HEK293 (cell line): ENCODE measurements at regions of chr14 and their contacts with region 1.

Region 1: DNA sequence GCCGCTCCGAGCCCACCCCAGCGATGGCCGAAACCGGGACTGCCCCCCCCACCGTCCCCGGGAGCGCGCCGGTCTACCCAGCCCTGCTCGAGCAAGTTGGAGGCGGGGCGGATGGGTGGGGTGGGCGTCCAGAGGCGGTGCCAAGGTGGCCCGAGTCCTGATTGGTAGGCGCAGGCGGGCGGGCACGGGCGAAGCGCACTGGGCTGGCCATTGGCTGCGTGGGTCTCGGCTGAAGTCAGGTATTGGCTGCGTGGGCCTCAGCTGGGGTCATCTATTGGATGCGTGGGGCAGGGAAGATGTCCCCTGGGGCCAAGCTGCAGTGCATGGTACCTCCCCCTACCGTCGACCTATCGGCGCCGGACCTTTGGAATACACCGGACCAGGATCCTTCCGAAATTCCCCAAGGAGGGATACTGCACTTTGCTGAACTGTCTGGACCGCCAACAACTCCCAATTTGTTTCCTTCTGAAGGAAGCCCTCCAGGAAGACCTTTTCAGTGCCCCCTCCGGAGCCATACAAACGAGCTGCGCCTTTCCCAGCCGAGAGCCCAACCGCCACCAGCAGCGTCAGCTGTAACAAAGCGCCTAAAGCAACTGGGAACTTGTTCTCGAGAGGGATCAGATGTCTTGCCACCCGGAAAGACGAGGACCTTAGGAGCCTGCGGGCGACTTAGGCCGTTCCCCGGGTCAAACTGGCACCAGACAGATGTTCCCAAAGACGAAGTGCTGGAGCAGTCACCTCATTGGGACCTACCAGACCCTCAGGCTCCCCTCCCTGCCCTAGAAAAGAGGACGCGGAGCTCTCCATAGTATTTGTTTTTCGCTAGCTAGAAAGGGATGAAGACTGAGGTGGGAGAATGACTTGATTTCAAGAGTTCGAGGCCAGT is at the start of gene HOMEZ:
- H3K4me3 ChIP-seq: peak within 1 kb of the TSS; percentile 90
- H3K27ac ChIP-seq: peak within 1 kb of the TSS; percentile 96
- H3K4me1 ChIP-seq: peaks cover 12% of the 10 kb centered on the region
- CTCF ChIP-seq: 0 out of 2 replicates have a peak, but pooled peaks have one; percentile 31

Region 2: DNA sequence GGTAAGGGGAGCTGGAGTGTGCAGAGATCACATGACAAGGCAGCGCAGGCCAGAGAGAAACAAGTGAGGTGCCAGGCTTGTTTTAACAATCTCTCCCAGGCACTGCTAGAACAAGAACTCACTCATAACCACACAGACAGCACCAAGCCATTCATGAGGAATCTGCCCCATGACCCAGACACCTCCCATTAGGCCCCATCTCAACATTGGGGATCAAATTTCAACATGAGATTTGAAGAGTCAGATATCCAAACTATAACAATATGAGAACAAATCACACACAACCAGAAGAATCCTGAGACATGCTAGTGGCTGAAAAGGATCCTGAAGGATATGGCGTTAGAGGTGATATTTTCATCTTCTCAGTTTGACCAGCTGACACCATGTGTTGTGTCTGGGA is 664.0 kb before region 1 on chr14:
- CTCF ChIA-PET with region 1: no interaction called
- POLR2A ChIA-PET with region 1: no interaction called
- H3K4me3 ChIP-seq: no peak overlapping the region
- H3K27ac ChIP-seq: no peak overlapping the region
- H3K4me1 ChIP-seq: no peaks in the 10 kb centered on the region
- CTCF ChIP-seq: no peak

Region 3: DNA sequence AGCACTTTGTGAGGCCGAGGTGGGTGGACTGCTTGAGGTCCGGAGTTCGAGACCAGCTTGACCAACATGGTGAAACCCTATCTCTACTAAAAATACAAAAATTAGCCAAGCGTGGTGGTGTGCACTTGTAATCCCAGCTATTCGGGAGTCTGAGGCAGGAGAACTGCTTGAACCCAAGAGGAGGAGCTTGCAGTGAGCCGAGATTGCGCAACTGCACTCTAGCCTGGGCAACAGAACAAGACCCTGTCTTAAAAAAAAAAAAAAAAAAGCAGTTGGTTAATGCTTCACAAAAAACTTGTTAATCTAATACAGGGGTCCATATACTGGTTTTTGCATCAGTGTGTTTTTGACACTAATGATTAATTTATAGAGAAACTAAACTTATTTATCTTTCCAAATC is 84.3 kb before region 1 on chr14:
- CTCF ChIA-PET with region 1: no interaction called
- POLR2A ChIA-PET with region 1: no interaction called
- H3K4me3 ChIP-seq: no peak overlapping the region
- H3K27ac ChIP-seq: no peak overlapping the region
- H3K4me1 ChIP-seq: no peaks in the 10 kb centered on the region
- CTCF ChIP-seq: no peak

Region 4: GRCh38 chr14:23301288-23301968 is 15.2 kb after region 1 on chr14:
- CTCF ChIA-PET with region 1: interaction called, 8 read pairs
- POLR2A ChIA-PET with region 1: interaction called, 41 read pairs
- H3K4me3 ChIP-seq: peak overlapping the region; percentile 66
- H3K27ac ChIP-seq: peak overlapping the region; percentile 97
- H3K4me1 ChIP-seq: peaks cover 13% of the 10 kb centered on the region; the same call in 1 of the 2 replicates
- CTCF ChIP-seq: peak; percentile 61; the same call in 1 of the 2 replicates

Region 5: GRCh38 chr14:23306410-23307145 is 20.3 kb after region 1 on chr14 and contains the start of gene BCL2L2:
- CTCF ChIA-PET with region 1: no interaction called
- POLR2A ChIA-PET with region 1: interaction called, 41 read pairs
- H3K4me3 ChIP-seq: peak within 1 kb of the TSS; percentile 56
- H3K27ac ChIP-seq: peak within 1 kb of the TSS; percentile 85
- H3K4me1 ChIP-seq: peaks cover 6% of the 10 kb centered on the region; the same call in 1 of the 2 replicates
- CTCF ChIP-seq: no peak